Mammary epithelial cell (primary cell): ENCODE measurements at regions of chr5 and their contacts with region 1.

Region 1: GRCh38 chr5:175181331-175181730 is 262.7 kb downstream of the DRD1 start:
- DNase-seq: no peak
- H3K4me3 ChIP-seq: no peak overlapping the region
- H3K27ac ChIP-seq: no peak overlapping the region
- H3K4me1 ChIP-seq: no peaks in the 10 kb centered on the region
- H3K27me3 ChIP-seq: no peaks in the 10 kb centered on the region
- CTCF ChIP-seq: no peak

Region 2: DNA sequence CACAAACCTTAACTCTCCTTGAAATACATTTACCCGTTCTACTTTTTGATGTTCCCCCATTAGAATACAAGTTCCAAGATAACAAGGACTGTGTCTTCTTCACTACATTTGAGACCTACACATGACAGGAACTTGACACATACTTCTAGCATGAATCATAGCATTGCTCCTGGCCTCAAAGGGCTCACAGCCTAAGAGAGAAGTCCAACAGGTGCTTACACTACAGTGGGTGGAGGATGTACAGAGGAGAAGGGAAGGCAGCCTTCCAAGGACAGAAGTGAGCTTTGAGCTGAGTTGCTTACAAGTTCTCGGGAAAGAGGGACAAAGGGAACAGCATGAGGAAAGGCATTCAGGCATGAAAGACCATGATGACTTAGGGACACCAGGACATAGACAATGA is 513.8 kb before region 1 on chr5:
- CTCF ChIA-PET with region 1: no interaction called
- dilution Hi-C with region 1: no loop called
- in situ Hi-C with region 1: no loop called
- intact Hi-C with region 1: no loop called
- DNase-seq: no peak
- H3K4me3 ChIP-seq: no peak overlapping the region
- H3K27ac ChIP-seq: no peak overlapping the region
- H3K4me1 ChIP-seq: no peaks in the 10 kb centered on the region
- H3K27me3 ChIP-seq: no peaks in the 10 kb centered on the region
- CTCF ChIP-seq: no peak

Region 3: DNA sequence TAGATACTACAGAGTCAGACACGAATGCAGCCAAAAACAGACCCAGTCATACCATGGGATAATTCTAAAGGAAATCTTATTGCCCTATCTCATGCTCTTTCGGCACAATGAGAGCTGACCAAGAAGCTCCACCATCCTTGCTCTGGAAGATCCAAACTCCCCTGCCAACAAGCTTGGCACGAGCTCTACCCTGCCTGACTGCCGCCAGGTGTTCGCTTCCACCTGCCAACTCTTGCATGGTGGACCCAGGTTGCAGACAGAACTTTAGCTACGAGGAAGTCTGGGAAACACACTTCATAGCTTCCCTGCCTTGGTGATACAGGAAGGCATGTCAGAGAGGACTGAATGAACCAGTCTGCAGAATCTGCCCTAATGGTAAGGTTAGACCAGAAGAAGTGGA is 92.4 kb before region 1 on chr5:
- CTCF ChIA-PET with region 1: no interaction called
- dilution Hi-C with region 1: loop called (anchors 5 kb)
- in situ Hi-C with region 1: no loop called
- intact Hi-C with region 1: no loop called
- DNase-seq: no peak
- H3K4me3 ChIP-seq: no peak overlapping the region
- H3K27ac ChIP-seq: no peak overlapping the region
- H3K4me1 ChIP-seq: no peaks in the 10 kb centered on the region
- H3K27me3 ChIP-seq: no peaks in the 10 kb centered on the region
- CTCF ChIP-seq: no peak

Region 4: DNA sequence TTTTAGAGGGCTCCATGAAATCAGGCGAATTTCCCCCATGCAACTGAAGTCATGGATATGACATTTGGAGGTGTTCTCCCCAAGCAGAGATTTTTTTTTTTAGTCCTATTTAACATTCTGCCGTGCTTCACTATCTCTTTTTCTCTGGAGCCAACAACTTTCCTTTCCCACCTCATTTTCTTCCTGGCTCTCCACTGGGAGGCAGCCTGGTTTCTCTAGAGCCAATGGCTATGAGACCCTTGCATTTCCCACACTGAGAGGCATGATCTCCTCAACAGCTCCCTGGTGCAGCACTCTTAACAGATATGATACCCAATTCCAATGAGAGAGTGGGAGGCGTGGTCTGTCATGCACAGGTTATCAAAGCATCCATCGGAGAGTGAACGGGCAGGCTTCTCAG is 48.1 kb before region 1 on chr5:
- CTCF ChIA-PET with region 1: no interaction called
- dilution Hi-C with region 1: no loop called
- in situ Hi-C with region 1: no loop called
- intact Hi-C with region 1: no loop called
- DNase-seq: no peak
- H3K4me3 ChIP-seq: no peak overlapping the region
- H3K27ac ChIP-seq: no peak overlapping the region
- H3K4me1 ChIP-seq: no peaks in the 10 kb centered on the region
- H3K27me3 ChIP-seq: no peaks in the 10 kb centered on the region
- CTCF ChIP-seq: no peak